B cell (primary cell): ENCODE measurements at regions of chr14 and their contacts with region 1.

Region 1: DNA sequence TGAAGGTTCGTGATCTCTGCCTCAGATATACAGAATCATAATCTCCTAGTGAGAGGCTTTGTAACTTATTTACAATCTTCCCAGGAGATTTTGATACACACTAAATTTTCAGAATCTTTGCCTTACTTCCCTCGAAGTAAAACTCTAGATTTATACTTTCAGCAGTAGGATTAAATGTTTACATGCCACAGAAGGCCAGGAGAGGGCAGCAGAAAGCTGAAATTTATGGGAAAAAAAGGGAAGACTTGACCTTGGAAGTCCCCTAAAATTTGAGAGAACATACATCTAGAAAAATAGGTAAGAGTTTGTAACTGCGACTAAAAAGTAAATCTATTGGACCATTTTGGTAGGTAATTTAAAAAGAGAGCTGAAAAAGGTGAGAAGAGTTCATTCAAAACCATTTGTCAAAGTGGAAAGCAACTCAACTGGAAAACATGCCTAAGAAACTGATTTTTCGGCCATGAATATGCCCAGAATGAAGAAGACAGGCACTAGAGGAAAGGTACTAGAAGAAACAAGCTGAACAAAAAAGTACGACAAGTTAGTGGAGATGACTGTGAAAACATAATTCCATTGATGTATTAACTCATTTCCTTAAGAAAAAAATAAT is 242.0 kb upstream of the MDGA2 start:
- DNase-seq: peak; percentile 62
- ATAC-seq: peak; percentile 39
- H3K4me3 ChIP-seq: no peak overlapping the region
- H3K4me3 Mint-ChIP-seq: no peak overlapping the region
- H3K27ac ChIP-seq: no peak overlapping the region
- H3K27ac Mint-ChIP-seq: no peak overlapping the region
- H3K4me1 ChIP-seq: no peaks in the 10 kb centered on the region
- H3K4me1 Mint-ChIP-seq: peaks cover 5% of the 10 kb centered on the region
- H3K27me3 ChIP-seq: no peaks in the 10 kb centered on the region
- H3K27me3 Mint-ChIP-seq: no peaks in the 10 kb centered on the region
- CTCF ChIP-seq: peak; percentile 68

Region 2: DNA sequence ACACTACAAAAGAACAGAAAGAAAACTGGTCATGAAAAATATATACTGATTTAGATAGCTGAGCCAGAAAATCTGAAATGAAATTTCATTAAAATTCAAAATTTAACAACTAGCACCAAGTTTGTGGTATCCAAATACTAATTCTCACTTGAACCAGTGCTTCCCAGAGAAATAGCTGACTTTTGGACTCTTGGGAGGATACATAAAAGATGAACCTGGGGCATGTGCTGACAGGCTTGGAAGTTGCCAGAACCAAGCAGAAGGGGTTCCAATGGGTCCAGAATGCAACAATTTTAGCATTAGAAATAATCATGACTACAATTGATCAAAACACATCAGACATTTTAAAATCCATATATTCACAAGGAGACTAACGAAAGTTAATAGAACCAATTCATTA is 417.1 kb before region 1 on chr14:
- CTCF ChIA-PET with region 1: no interaction called
- POLR2A ChIA-PET with region 1: no interaction called
- intact Hi-C with region 1: no loop called
- DNase-seq: no peak
- ATAC-seq: no peak
- H3K4me3 ChIP-seq: no peak overlapping the region
- H3K4me3 Mint-ChIP-seq: no peak overlapping the region
- H3K27ac ChIP-seq: no peak overlapping the region
- H3K27ac Mint-ChIP-seq: no peak overlapping the region
- H3K4me1 ChIP-seq: no peaks in the 10 kb centered on the region
- H3K4me1 Mint-ChIP-seq: no peaks in the 10 kb centered on the region
- H3K27me3 ChIP-seq: no peaks in the 10 kb centered on the region
- H3K27me3 Mint-ChIP-seq: no peaks in the 10 kb centered on the region
- CTCF ChIP-seq: no peak

Region 3: DNA sequence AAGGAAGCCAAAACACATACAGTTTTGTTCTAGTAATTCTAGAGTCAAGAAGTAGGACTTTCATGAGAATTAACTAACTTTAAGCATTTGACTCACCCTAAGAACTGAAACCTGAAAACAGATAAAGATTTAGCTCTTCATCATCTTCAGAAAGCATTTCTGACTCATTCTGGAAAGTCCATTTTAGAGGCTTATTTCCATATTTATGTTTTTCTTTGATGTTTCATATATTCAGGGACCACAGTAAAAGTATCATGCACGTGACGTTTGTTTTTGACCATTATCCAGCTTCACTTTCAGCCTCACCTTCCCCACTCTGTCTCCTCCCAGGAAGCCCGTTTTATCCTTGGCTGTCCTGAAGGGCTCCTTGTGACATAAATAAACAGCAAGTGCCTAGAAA is 321.2 kb before region 1 on chr14:
- CTCF ChIA-PET with region 1: no interaction called
- POLR2A ChIA-PET with region 1: no interaction called
- intact Hi-C with region 1: no loop called
- DNase-seq: no peak
- ATAC-seq: no peak
- H3K4me3 ChIP-seq: no peak overlapping the region
- H3K4me3 Mint-ChIP-seq: no peak overlapping the region
- H3K27ac ChIP-seq: no peak overlapping the region
- H3K27ac Mint-ChIP-seq: no peak overlapping the region
- H3K4me1 ChIP-seq: no peaks in the 10 kb centered on the region
- H3K4me1 Mint-ChIP-seq: no peaks in the 10 kb centered on the region
- H3K27me3 ChIP-seq: no peaks in the 10 kb centered on the region
- H3K27me3 Mint-ChIP-seq: no peaks in the 10 kb centered on the region
- CTCF ChIP-seq: no peak

Region 4: GRCh38 chr14:47730296-47730695 is 187.2 kb before region 1 on chr14:
- CTCF ChIA-PET with region 1: no interaction called
- POLR2A ChIA-PET with region 1: no interaction called
- intact Hi-C with region 1: no loop called
- DNase-seq: no peak
- ATAC-seq: no peak
- H3K4me3 ChIP-seq: no peak overlapping the region
- H3K4me3 Mint-ChIP-seq: no peak overlapping the region
- H3K27ac ChIP-seq: no peak overlapping the region
- H3K27ac Mint-ChIP-seq: no peak overlapping the region
- H3K4me1 ChIP-seq: no peaks in the 10 kb centered on the region
- H3K4me1 Mint-ChIP-seq: no peaks in the 10 kb centered on the region
- H3K27me3 ChIP-seq: no peaks in the 10 kb centered on the region
- H3K27me3 Mint-ChIP-seq: no peaks in the 10 kb centered on the region
- CTCF ChIP-seq: no peak

Region 5: DNA sequence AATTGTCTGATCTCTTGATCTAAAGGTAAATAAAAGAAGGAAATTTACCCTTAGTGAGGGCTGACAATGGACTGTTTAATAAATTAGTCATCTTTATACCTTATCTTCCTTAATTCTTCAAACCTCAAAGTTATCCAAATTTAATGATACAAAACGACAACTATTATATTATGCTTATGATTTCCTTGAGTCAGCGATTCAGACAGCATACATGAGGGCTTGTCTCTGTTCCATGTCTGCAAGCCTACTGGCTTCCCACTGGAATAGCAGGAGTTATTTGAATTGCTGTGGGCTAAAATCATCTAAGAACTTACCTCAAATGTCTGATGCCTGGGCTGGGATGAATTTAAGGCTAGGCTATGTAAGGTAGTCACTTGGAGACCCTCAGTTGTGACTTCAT is 44.9 kb before region 1 on chr14:
- CTCF ChIA-PET with region 1: no interaction called
- POLR2A ChIA-PET with region 1: no interaction called
- intact Hi-C with region 1: no loop called
- DNase-seq: no peak
- ATAC-seq: no peak
- H3K4me3 ChIP-seq: no peak overlapping the region
- H3K4me3 Mint-ChIP-seq: no peak overlapping the region
- H3K27ac ChIP-seq: no peak overlapping the region
- H3K27ac Mint-ChIP-seq: no peak overlapping the region
- H3K4me1 ChIP-seq: no peaks in the 10 kb centered on the region
- H3K4me1 Mint-ChIP-seq: no peaks in the 10 kb centered on the region
- H3K27me3 ChIP-seq: no peaks in the 10 kb centered on the region
- H3K27me3 Mint-ChIP-seq: no peaks in the 10 kb centered on the region
- CTCF ChIP-seq: no peak

Region 6: GRCh38 chr14:48398675-48399282 is 481.3 kb after region 1 on chr14:
- CTCF ChIA-PET with region 1: interaction called, 3 read pairs
- POLR2A ChIA-PET with region 1: no interaction called
- intact Hi-C with region 1: loop called (anchors 1 kb)
- DNase-seq: peak; percentile 29
- ATAC-seq: no peak
- H3K4me3 ChIP-seq: no peak overlapping the region
- H3K4me3 Mint-ChIP-seq: no peak overlapping the region
- H3K27ac ChIP-seq: no peak overlapping the region
- H3K27ac Mint-ChIP-seq: no peak overlapping the region
- H3K4me1 ChIP-seq: no peaks in the 10 kb centered on the region
- H3K4me1 Mint-ChIP-seq: no peaks in the 10 kb centered on the region
- H3K27me3 ChIP-seq: no peaks in the 10 kb centered on the region
- H3K27me3 Mint-ChIP-seq: no peaks in the 10 kb centered on the region
- CTCF ChIP-seq: peak; percentile 59

Region 7: DNA sequence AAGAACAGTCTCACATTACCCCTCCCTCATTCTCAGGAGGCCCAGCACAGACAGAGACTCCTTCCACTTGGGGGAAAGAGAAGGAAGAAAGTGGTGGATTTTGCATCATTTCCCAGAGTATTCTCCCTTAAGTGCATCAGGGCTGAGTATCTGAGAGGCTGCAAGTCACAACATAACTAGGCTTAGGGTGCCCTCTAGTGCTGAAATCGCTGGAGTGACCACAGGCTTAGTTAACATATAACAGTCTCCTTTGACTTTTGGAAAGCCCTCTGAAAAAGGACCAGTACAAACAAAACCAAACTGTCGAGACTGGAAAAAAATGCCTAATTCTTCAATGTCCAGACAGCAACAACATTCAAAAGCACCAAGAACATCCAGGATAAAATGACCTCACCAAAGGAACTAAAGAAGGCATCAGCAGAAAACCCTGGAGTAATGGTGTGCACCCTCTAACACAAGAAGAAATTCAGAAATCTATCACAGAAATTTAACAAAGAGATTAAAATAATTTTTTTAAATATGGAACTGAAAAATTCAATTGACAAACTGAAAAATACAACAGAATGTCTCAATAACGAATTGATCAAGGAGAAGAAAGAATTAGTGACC is 1256.4 kb after region 1 on chr14:
- CTCF ChIA-PET with region 1: interaction called, 23 read pairs
- POLR2A ChIA-PET with region 1: no interaction called
- intact Hi-C with region 1: no loop called
- DNase-seq: peak; percentile 81
- ATAC-seq: peak; percentile 76
- H3K4me3 ChIP-seq: no peak overlapping the region
- H3K4me3 Mint-ChIP-seq: no peak overlapping the region
- H3K27ac ChIP-seq: no peak overlapping the region
- H3K27ac Mint-ChIP-seq: no peak overlapping the region
- H3K4me1 ChIP-seq: no peaks in the 10 kb centered on the region
- H3K4me1 Mint-ChIP-seq: no peaks in the 10 kb centered on the region
- H3K27me3 ChIP-seq: no peaks in the 10 kb centered on the region
- H3K27me3 Mint-ChIP-seq: peaks cover 15% of the 10 kb centered on the region
- CTCF ChIP-seq: peak; percentile 80

Region 8: GRCh38 chr14:49303946-49304516 is 1386.6 kb after region 1 on chr14:
- CTCF ChIA-PET with region 1: interaction called, 5 read pairs
- POLR2A ChIA-PET with region 1: no interaction called
- intact Hi-C with region 1: loop called (anchors 5 kb)
- DNase-seq: no peak
- ATAC-seq: no peak
- H3K4me3 ChIP-seq: no peak overlapping the region
- H3K4me3 Mint-ChIP-seq: no peak overlapping the region
- H3K27ac ChIP-seq: no peak overlapping the region
- H3K27ac Mint-ChIP-seq: no peak overlapping the region
- H3K4me1 ChIP-seq: no peaks in the 10 kb centered on the region
- H3K4me1 Mint-ChIP-seq: peaks cover 1% of the 10 kb centered on the region
- H3K27me3 ChIP-seq: peaks cover 0 to 2% (median 0%) of the 10 kb centered on the region in 4 experiments
- H3K27me3 Mint-ChIP-seq: peaks cover 10% of the 10 kb centered on the region
- CTCF ChIP-seq: no peak